Psoas muscle (tissue), 8 donors: ENCODE measurements at regions of chr4 and their contacts with region 1.

Region 1: GRCh38 chr4:147866532-147867271 is 134.8 kb downstream of the ARHGAP10 start:
- DNase-seq: peak; percentile 89 to 95
- ATAC-seq: peak; percentile 91 to 93 (median 92)
- H3K4me3 ChIP-seq: no peak overlapping the region
- H3K27ac ChIP-seq: peak overlapping the region; percentile 26
- H3K4me1 ChIP-seq: peaks cover 24% of the 10 kb centered on the region
- H3K27me3 ChIP-seq: no peaks in the 10 kb centered on the region
- CTCF ChIP-seq: peak; percentile 100

Region 2: DNA sequence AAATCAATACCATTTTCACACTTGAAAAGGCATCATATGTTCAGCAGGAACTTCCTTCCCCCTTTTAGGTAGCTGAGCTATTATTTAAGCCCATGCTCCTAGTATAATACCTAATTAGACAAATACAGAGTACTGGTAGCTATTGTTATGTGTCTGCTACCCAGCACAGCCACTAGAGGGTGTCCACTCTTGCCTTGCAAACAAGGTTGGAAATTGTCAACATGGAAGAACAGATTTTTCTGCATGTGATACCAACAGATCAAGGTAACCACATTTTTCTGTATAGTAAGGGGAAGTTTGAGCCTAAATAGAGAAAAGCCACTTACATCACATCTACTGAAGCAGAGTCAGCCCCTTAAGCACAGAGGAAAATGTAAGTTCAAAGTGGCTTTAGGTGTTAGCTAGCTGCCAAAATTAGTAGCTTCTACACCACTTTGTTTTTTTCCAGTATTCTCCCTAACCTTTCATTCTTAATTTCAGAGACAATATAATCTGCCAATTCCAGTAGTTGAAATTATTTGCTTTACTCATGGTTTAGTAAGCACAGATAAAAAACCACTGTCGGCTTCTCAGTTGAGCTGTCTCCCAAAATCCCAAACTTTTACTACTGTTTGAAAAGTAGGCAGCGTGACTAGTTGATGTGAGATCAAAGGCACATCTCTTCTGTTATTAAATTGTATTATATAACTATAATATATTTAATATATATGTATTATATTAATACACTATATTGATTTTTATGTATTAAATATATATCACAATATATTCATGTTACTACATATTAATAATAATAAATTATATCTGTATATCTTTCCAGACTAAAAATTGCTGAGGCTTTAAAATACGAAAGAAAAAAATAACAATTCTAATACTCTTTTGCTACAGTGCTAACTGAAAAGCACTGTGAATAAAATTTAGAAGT is 347.6 kb before region 1 on chr4:
- intact Hi-C with region 1: loop called in 1 of 2 experiments (anchors 5 kb)
- DNase-seq: peak in 1 of 2 donors; percentile 17
- ATAC-seq: peak in 2 of 4 donors; percentile 61 to 70
- H3K4me3 ChIP-seq: no peak overlapping the region
- H3K27ac ChIP-seq: no peak overlapping the region
- H3K4me1 ChIP-seq: no peaks in the 10 kb centered on the region
- H3K27me3 ChIP-seq: no peaks in the 10 kb centered on the region
- CTCF ChIP-seq: peak; percentile 77

Region 3: DNA sequence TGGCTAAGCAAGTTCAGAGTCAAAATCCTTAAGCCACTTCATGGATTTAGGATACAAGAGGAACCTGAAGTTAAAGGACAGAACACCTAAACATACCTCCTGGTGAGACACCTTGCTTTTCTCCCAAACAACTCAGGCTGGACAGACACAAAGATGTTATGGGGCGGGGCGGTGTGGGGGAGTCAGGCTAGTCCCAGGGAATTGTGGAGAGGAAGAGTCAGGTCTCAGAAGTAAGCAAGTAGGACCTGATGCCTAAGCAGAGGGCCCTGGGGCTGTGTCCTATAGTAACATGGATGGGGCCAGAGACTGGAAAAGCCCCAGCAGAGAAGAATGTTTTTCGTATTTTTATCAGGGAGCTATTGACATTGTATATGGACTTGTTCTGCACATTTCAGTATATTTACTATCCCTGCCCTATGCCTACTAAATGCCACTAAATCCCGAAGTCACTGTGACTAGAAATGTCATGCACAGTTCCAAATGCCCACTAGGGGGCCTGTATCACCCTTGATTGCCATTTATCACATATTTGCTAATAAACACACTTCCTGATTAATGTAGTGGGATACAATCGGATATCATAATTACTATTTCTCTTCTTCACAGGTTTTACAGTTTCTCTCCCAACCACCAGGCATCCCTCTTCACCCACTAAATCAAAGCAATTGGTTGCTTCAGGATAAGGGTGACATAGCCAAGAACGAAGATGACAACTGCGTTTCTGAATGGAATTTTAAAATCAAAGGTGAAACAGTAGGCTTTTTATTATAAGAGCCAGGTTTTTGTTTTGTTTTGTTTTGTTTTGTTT is 158.6 kb before region 1 on chr4:
- intact Hi-C with region 1: loop called (anchors 1 to 2 kb)
- DNase-seq: no peak
- ATAC-seq: peak; percentile 73 to 88 (median 80)
- H3K4me3 ChIP-seq: peak overlapping the region; percentile 31
- H3K27ac ChIP-seq: no peak overlapping the region
- H3K4me1 ChIP-seq: no peaks in the 10 kb centered on the region
- H3K27me3 ChIP-seq: no peaks in the 10 kb centered on the region
- CTCF ChIP-seq: peak; percentile 91

Region 4: DNA sequence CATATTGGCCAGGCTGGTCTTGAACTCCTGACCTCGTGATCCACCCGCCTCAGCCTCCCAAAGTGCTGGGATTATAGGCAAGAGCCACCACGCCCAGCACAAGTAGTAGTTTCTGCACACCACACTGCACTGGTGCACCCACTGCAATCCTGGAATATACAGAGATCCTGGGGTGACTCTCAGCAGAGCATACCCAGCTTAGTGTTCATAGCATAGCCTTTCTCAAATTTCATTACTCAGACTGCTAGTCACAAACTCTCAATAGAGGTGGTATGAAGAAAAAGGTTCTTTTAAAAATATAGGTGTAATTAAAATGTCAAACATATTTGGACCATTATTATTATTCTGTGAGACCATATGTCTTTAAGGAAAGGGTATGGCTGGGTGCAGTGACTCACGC is 141.0 kb before region 1 on chr4:
- intact Hi-C with region 1: loop called in 1 of 2 experiments (anchors 5 kb)
- DNase-seq: no peak
- ATAC-seq: no peak
- H3K4me3 ChIP-seq: no peak overlapping the region
- H3K27ac ChIP-seq: no peak overlapping the region
- H3K4me1 ChIP-seq: no peaks in the 10 kb centered on the region
- H3K27me3 ChIP-seq: no peaks in the 10 kb centered on the region
- CTCF ChIP-seq: no peak